Sciatic nerve (tissue), 2 donors: ENCODE measurements at regions of chr1 and their contacts with region 1.

Region 1: DNA sequence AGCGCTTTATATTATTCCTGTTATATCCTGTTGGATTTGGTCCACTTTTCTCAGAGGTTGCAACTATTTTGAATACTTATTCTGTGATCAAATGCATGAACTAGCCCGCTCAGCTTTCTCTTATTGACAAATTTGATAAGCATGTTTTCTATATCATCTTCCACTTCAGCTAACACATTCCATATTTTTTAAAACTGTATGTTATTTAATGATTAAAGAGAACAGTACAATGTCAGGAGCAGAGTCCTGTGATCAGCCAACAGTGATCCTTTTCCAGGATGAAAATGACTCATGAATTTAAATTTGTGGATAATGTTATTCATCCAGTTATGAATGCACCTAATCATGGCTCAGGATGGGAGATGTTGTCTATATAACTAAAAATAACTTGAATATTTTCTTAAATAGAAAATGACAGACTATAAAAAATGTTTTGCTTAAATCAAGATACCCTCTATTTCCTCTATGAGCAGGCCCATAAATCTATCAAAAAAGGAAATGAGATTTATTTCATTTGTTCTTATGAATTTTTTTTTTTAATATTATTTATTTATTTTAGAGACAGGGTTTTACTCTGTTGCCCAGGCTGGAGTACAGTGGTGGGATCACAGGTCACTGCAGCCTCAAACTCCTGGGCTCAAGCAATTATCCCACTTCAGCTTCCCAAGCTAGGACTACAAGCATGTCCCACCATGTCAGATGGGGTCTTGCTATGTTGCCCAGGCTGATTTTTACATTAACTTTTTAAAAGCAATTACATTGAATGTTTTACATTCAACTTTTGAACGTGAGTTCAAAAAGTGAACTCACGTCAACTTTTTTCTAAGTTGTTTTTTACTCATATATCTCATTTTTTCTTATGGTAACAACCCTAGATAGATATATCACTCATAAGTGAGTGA is 12.5 kb downstream of the BPNT1 start:
- DNase-seq: no peak
- ATAC-seq: no peak

Region 2: GRCh38 chr1:219173758-219174588 is 903.1 kb before region 1 on chr1 and contains the start of gene LYPLAL1:
- intact Hi-C with region 1: loop called (anchors 10 kb)
- DNase-seq: peak; percentile 94
- ATAC-seq: peak; percentile 98
- total RNA-seq, gene LYPLAL1: 45.1 TPM

Region 3: DNA sequence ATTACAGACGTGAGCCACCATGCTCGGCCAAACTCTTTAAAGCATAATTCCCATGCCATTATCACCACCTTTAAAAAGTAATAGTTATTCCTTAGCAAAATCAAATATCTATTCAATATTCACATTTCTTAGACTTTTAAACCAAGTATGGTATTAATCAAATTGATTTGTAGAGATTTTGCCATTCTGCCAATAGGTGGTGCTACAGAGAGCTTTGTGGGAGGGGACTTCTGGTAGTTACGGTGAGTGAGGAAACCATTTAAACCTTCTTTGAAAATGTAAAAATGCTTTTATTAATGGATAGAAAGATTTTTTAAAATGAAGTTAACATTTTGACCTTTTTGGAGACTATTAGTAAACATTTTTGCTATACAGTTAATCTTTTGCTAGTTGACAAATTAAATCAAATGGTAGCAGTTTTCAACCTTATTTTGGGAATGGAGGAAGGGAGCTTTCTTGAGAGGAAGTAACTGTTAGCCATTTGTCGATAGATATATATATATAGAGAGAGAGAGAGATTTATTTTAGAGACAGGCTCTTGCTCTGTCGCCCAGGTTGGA is 36.1 kb after region 1 on chr1:
- intact Hi-C with region 1: no loop called
- DNase-seq: no peak
- ATAC-seq: no peak

Region 4: GRCh38 chr1:220565670-220566069 is 488.6 kb after region 1 on chr1:
- intact Hi-C with region 1: loop called (anchors 5 kb)
- DNase-seq: no peak
- ATAC-seq: no peak

Region 5: DNA sequence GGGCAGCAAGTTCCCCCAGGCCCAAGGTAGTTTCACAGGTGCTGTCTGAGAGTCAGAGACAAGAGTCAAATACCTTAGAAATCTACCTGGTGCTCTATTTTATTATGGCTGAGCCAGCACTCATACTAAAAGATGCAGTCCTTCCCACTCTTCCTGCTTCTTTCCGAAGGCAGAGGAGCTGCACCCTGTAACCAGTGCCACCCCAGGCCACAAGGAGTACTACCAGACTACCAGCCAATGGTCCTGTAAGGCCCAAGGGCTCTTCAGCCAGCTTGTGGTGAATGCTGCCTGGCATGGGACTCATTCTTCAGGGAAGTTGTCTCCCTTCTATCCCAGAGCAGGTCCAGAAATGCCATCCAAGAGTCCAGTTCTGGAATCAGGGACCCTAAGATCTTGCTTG is 1868.6 kb after region 1 on chr1:
- intact Hi-C with region 1: no loop called
- DNase-seq: no peak
- ATAC-seq: no peak